ENCODE measurements at regions of chr7 and their contacts with region 1.

Region 1: DNA sequence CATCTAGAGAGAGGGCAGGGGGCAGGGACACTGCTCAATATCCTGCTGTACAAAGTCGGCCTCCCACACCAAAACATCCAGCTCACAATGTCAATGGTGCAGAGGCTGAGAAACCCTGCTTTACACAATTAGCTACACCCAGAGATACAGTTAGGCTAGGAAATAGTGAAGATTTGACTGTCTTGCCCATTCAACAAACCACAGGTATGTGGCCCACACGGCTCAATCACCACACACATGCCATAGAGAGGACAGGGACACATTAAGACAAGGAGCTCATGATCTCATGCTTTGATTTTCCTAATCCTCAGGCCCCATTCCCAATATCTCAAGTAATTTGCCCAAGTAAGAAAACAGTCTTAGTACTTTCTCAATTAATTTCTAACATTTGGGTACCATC is 110.4 kb downstream of the OSBPL3 start:
- H3K4me3 Mint-ChIP-seq: no peak overlapping the region
- H3K27ac Mint-ChIP-seq: no peak overlapping the region
- H3K4me1 Mint-ChIP-seq: peaks cover 30% of the 10 kb centered on the region
- H3K27me3 Mint-ChIP-seq: no peaks in the 10 kb centered on the region

Region 2: GRCh38 chr7:24819916-24820689 is 49.5 kb before region 1 on chr7:
- intact Hi-C with region 1: loop called (anchors 5 kb)
- H3K4me3 Mint-ChIP-seq: peak overlapping the region; percentile 10
- H3K27ac Mint-ChIP-seq: peak overlapping the region; percentile 50
- H3K4me1 Mint-ChIP-seq: peaks cover 25% of the 10 kb centered on the region
- H3K27me3 Mint-ChIP-seq: no peaks in the 10 kb centered on the region

Region 3: DNA sequence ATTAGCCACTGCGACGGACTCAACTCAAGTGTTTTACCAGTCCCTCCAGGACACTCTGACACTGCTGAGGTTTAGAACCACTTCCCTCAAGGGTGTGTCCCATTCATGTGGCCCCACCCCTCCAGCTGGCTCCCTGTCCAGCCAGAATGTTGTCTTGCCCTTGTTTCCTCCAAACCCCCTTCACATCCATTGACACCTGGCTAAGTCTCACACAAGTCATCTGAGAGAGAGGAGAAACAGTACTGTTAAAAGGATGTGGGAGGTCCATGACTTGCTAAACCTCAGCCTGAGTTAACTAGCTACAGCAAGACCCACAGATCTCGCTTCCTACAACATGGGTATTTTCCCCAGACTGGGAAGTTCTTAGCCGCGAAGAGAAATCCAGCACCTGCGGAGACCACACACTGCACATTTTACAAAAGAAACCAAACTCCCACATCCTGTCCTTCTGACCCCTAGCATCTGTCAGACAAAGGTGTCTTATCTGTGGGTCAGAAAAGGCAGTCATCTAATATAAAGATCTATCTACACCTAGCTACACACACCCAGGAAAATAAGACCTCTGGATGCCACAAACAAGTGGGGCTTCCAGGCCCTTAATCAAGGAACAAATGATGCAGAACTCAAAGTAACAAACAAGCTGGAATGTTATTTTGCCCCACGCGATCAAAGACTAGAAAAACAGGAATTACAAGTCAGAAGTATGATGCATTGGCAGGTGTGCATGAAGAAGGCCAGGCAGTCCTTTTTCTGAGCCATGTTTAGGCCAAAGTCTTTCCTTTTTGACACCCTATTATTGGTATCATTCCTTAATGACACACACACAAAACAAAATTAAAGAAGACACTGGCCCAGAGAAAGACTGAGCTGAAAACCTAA is 96.5 kb after region 1 on chr7:
- intact Hi-C with region 1: no loop called
- H3K4me3 Mint-ChIP-seq: peak overlapping the region; percentile 7
- H3K27ac Mint-ChIP-seq: peak overlapping the region; percentile 86
- H3K4me1 Mint-ChIP-seq: peaks cover 75% of the 10 kb centered on the region
- H3K27me3 Mint-ChIP-seq: no peaks in the 10 kb centered on the region